ENCODE measurements at regions of chr12 and their contacts with region 1.

Region 1: GRCh38 chr12:53321074-53321814 is at the start of gene AAAS:
- DNase-seq: peak; percentile 88
- ATAC-seq: peak; percentile 88
- H3K4me3 ChIP-seq: peak within 1 kb of the TSS; percentile 90
- H3K27ac ChIP-seq: peak within 1 kb of the TSS; percentile 89
- H3K4me1 ChIP-seq: peaks cover 25 to 47% of the 10 kb centered on the region in 2 experiments
- H3K27me3 ChIP-seq: no peaks in the 10 kb centered on the region
- CTCF ChIP-seq: peak; percentile 91 to 98 (median 96)
- POLR2A ChIP-seq: peak; percentile 93
- RAD21 ChIP-seq: peak; percentile 54
- total RNA-seq, gene AAAS: 87.9 TPM

Region 2: GRCh38 chr12:52956987-52957386 is 364.3 kb before region 1 on chr12:
- CTCF ChIA-PET with region 1: no interaction called
- POLR2A ChIA-PET with region 1: no interaction called
- RAD21 ChIA-PET with region 1: no interaction called
- intact Hi-C with region 1: no loop called
- DNase-seq: no peak
- ATAC-seq: no peak
- H3K4me3 ChIP-seq: no peak overlapping the region
- H3K27ac ChIP-seq: no peak overlapping the region
- H3K4me1 ChIP-seq: peaks cover 22 to 42% of the 10 kb centered on the region in 2 experiments
- H3K27me3 ChIP-seq: no peaks in the 10 kb centered on the region
- CTCF ChIP-seq: no peak
- POLR2A ChIP-seq: no peak
- RAD21 ChIP-seq: no peak

Region 3: GRCh38 chr12:53180220-53180930 is 140.9 kb before region 1 on chr12 and contains the starts of genes CSAD and ZNF740:
- CTCF ChIA-PET with region 1: interaction called, 10 read pairs
- POLR2A ChIA-PET with region 1: interaction called, 3 read pairs
- RAD21 ChIA-PET with region 1: interaction called in 1 of 2 experiments, 3 read pairs
- intact Hi-C with region 1: no loop called
- DNase-seq: peak; percentile 95
- ATAC-seq: peak; percentile 96
- H3K4me3 ChIP-seq: peak within 1 kb of the TSS; percentile 78 to 86
- H3K27ac ChIP-seq: peak within 1 kb of the TSS; percentile 85
- H3K4me1 ChIP-seq: peaks cover 15 to 32% of the 10 kb centered on the region in 2 experiments
- H3K27me3 ChIP-seq: no peaks in the 10 kb centered on the region
- CTCF ChIP-seq: no peak
- POLR2A ChIP-seq: no peak
- RAD21 ChIP-seq: no peak
- total RNA-seq, gene CSAD: 20.3 TPM
- total RNA-seq, gene ZNF740: 49.7 TPM

Region 4: GRCh38 chr12:53295070-53295890 is 26.0 kb before region 1 on chr12 and contains the start of gene PFDN5:
- CTCF ChIA-PET with region 1: interaction called, 13 read pairs
- POLR2A ChIA-PET with region 1: interaction called, 13 read pairs
- RAD21 ChIA-PET with region 1: no interaction called
- intact Hi-C with region 1: no loop called
- DNase-seq: peak; percentile 82
- ATAC-seq: peak; percentile 84
- H3K4me3 ChIP-seq: peak within 1 kb of the TSS; percentile 88 to 100
- H3K27ac ChIP-seq: peak within 1 kb of the TSS; percentile 74
- H3K4me1 ChIP-seq: peaks cover 21 to 41% of the 10 kb centered on the region in 2 experiments
- H3K27me3 ChIP-seq: no peaks in the 10 kb centered on the region
- CTCF ChIP-seq: no peak
- POLR2A ChIP-seq: peak; percentile 88
- RAD21 ChIP-seq: no peak
- total RNA-seq, gene PFDN5: 318 TPM

Region 5: DNA sequence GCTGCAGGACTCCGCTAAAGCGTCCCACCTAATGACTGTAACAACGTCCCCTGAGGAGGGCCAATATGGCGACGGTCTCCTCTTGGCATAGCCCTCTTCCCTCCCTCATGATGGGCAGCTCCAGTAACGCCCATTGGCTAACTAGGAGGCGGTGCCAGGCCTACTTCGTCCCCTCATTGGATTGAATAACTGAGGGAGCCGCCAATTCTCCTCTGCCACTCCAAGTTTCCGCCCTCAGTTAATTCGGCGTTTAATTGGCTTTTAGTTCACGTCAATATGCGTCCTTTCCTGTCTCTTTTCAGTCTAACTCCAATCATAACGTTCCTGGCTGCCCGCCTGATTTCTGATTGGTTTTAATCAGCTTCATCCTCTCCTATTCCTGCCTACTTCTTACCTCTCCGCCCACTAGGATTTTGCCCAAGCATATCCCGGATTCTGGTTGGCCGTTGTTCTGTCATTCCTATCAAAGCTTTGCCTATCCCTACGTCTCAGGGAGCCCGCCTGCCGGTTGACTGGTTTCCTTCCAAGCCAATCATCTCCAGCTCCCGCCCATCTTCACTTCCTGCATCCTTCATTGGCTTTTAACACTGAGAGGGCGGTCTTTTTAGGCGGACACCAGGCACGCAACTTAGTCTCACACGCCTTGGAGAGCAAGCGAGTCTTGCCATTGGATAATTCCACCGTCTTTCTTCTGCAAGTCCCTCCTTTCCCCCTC is 58.3 kb after region 1 on chr12:
- CTCF ChIA-PET with region 1: interaction called, 25 read pairs
- POLR2A ChIA-PET with region 1: interaction called, 25 read pairs
- RAD21 ChIA-PET with region 1: interaction called in 1 of 2 experiments, 3 read pairs
- intact Hi-C with region 1: loop called (anchors 2 kb)
- DNase-seq: peak; percentile 100
- ATAC-seq: peak; percentile 78
- H3K4me3 ChIP-seq: peak overlapping the region; percentile 63 to 71
- H3K27ac ChIP-seq: peak overlapping the region; percentile 89
- H3K4me1 ChIP-seq: peaks cover 28 to 51% of the 10 kb centered on the region in 2 experiments
- H3K27me3 ChIP-seq: no peaks in the 10 kb centered on the region
- CTCF ChIP-seq: no peak
- POLR2A ChIP-seq: no peak
- RAD21 ChIP-seq: no peak

Region 6: DNA sequence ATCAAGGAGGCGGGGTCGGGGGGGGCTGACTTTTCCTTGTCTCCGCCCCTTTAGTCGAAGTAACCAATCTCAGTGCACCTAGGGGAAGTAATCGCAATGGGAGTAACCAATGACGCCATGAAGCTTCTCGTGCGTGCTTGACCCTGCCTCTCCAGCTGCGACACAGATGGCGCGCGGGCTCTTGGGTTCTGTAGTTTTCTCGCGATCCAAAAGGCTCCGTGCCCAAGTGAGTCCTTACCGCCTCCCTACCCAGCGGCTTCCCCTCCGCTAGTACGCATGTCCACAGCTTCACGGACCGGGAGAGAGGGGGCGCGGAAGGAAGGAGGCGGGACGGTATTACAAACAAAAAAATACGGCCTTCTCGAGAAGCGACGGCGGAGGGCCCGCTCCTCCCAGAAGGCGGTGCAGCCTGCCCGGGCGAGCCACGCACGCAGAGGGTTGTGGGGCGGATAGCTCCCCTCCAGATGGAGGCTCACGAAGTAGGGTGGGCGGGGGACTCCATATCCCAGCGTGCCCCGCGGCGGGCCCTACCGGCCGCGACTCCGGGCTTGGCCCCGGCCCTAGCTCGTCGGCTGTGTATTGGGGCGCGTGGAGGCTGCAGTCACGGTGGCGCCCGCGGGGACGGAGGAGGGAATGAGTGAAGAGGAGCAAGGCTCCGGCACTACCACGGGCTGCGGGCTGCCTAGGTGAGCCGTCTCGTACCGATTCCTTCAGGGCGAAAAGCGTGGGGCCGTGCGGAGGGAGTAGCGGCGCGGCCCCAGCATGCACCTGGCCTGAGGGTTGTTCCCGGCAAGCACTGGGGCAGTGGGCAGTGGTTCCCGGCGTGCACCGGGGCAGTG is 179.8 kb after region 1 on chr12 and contains the start of gene TARBP2:
- CTCF ChIA-PET with region 1: interaction called, 29 read pairs
- POLR2A ChIA-PET with region 1: interaction called, 17 read pairs
- RAD21 ChIA-PET with region 1: no interaction called
- intact Hi-C with region 1: loop called (anchors 2 kb)
- DNase-seq: peak; percentile 99
- ATAC-seq: peak; percentile 78
- H3K4me3 ChIP-seq: peak within 1 kb of the TSS; percentile 75 to 87
- H3K27ac ChIP-seq: peak within 1 kb of the TSS; percentile 90
- H3K4me1 ChIP-seq: peaks cover 13 to 39% of the 10 kb centered on the region in 2 experiments
- H3K27me3 ChIP-seq: no peaks in the 10 kb centered on the region
- CTCF ChIP-seq: no peak
- POLR2A ChIP-seq: peak; percentile 76
- RAD21 ChIP-seq: no peak
- total RNA-seq, gene TARBP2: 40.1 TPM

Region 7: GRCh38 chr12:53974084-53975063 is 653.1 kb after region 1 on chr12 and contains the start of gene HOTAIR:
- CTCF ChIA-PET with region 1: no interaction called
- POLR2A ChIA-PET with region 1: no interaction called
- RAD21 ChIA-PET with region 1: no interaction called
- intact Hi-C with region 1: no loop called
- DNase-seq: no peak
- ATAC-seq: peak; percentile 72
- H3K4me3 ChIP-seq: peak within 1 kb of the TSS; percentile 46 to 59
- H3K27ac ChIP-seq: peak within 1 kb of the TSS; percentile 19; the same call in 1 of the 2 replicates
- H3K4me1 ChIP-seq: peaks cover 0 to 14% of the 10 kb centered on the region in 2 experiments; a peak in 2 of 4 replicates
- H3K27me3 ChIP-seq: peaks cover 4% of the 10 kb centered on the region; the same call in 1 of the 2 replicates
- CTCF ChIP-seq: no peak
- POLR2A ChIP-seq: no peak
- RAD21 ChIP-seq: no peak
- total RNA-seq, gene HOTAIR: 0.25 TPM

Measured in HCT116 (cell line).